ENCODE measurements at regions of chr3 and their contacts with region 1.

Region 1: GRCh38 chr3:4978204-4978965 is 852 bp upstream of the BHLHE40 start:
- DNase-seq: peak; percentile 95
- ATAC-seq: peak; percentile 59
- H3K4me3 Mint-ChIP-seq: peak overlapping the region; percentile 91
- H3K27ac Mint-ChIP-seq: peak overlapping the region; percentile 96
- H3K4me1 Mint-ChIP-seq: peaks cover 38% of the 10 kb centered on the region
- H3K27me3 Mint-ChIP-seq: no peaks in the 10 kb centered on the region

Region 2: DNA sequence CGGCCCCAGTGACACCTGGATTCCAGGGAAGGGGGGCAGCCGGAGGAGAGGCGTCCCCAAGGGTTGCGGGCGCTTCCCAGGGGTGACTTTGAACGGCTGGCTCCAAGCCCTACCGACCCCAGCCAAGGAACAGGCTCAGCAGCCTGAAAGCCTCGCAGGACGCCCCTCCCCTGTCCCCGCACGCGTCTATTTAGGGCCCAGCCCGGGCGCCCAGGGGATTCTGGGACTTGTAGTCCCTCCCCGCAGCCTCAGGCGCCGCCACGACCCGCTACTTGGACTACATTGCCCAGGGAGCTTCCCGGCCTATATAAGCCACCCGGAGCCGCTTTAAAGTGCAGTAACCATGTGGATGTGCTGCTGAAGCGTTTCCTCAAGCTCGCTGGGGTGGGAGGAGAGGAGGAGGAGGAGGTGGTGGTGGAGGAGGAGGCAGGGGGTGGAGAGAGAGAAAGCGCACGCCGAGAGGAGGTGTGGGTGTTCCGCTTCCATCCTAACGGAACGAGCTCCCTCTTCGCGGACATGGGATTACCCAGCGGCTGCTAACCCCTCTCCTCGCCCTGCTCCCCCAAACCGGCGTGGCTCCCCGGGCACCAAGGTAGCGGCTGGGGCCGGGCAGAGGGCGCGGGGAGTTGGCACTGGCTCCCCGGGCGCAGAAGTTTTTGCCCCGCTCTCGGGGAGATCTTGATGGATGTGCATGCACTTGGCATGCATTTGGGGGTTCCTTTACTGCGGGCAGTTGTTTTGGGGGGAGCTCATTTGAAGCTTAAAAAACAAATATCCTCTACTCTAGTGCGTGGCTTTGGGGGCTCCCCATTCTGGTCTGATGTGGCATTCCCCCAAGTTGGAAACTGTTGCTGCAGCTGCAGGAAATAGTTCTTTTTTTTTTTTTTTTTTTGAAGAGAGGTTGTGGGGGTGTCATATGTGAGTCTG is 485.1 kb before region 1 on chr3 and contains the start of gene ITPR1:
- CTCF ChIA-PET with region 1: no interaction called
- POLR2A ChIA-PET with region 1: interaction called, 18 read pairs
- DNase-seq: peak; percentile 99
- ATAC-seq: peak; percentile 91
- H3K4me3 Mint-ChIP-seq: peak within 1 kb of the TSS; percentile 94
- H3K27ac Mint-ChIP-seq: peak within 1 kb of the TSS; percentile 89
- H3K4me1 Mint-ChIP-seq: peaks cover 39% of the 10 kb centered on the region
- H3K27me3 Mint-ChIP-seq: peaks cover 20% of the 10 kb centered on the region
- total RNA-seq, gene ITPR1: 53.8 to 57.3 TPM

Region 3: GRCh38 chr3:4826237-4827100 is 151.9 kb before region 1 on chr3:
- CTCF ChIA-PET with region 1: interaction called, 272 read pairs
- POLR2A ChIA-PET with region 1: interaction called, 737 read pairs
- DNase-seq: no peak
- ATAC-seq: no peak
- H3K4me3 Mint-ChIP-seq: peak overlapping the region; percentile 78
- H3K27ac Mint-ChIP-seq: peak overlapping the region; percentile 86
- H3K4me1 Mint-ChIP-seq: peaks cover 94% of the 10 kb centered on the region
- H3K27me3 Mint-ChIP-seq: no peaks in the 10 kb centered on the region

Region 4: GRCh38 chr3:4866841-4867240 is 111.5 kb before region 1 on chr3:
- CTCF ChIA-PET with region 1: interaction called, 14 read pairs
- POLR2A ChIA-PET with region 1: interaction called, 12 read pairs
- DNase-seq: no peak
- ATAC-seq: no peak
- H3K4me3 Mint-ChIP-seq: peak overlapping the region; percentile 80
- H3K27ac Mint-ChIP-seq: peak overlapping the region; percentile 93
- H3K4me1 Mint-ChIP-seq: peaks cover 58% of the 10 kb centered on the region
- H3K27me3 Mint-ChIP-seq: no peaks in the 10 kb centered on the region

Region 5: DNA sequence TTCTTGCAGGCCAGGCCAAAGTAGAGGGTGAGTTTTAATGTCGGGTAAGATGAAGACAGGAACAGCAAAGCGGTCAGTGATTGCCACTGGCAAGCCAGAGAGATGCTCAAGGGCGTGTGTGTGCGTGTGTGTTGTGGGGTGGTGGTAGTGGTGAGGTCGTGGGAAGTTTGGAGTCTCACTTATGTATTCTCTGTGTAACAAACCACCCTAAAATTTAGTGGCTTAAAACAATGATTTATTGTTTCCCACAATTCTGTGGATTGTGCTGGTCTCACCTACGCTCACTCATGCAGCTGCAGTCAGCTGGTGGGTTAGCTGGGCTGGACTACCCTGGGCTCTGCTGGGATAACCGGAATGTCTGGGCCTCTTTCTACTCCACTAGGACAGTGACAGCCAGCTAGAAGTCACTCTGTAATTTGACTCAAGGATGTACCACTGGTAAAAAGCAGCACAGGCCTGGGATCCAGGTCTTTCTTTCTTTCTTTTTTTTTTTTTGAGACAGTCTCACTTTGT is 50.1 kb before region 1 on chr3:
- CTCF ChIA-PET with region 1: interaction called, 10 read pairs
- POLR2A ChIA-PET with region 1: interaction called, 6 read pairs
- DNase-seq: peak; percentile 47
- ATAC-seq: peak; percentile 60
- H3K4me3 Mint-ChIP-seq: no peak overlapping the region
- H3K27ac Mint-ChIP-seq: peak overlapping the region; percentile 76
- H3K4me1 Mint-ChIP-seq: peaks cover 33% of the 10 kb centered on the region
- H3K27me3 Mint-ChIP-seq: no peaks in the 10 kb centered on the region

Region 6: DNA sequence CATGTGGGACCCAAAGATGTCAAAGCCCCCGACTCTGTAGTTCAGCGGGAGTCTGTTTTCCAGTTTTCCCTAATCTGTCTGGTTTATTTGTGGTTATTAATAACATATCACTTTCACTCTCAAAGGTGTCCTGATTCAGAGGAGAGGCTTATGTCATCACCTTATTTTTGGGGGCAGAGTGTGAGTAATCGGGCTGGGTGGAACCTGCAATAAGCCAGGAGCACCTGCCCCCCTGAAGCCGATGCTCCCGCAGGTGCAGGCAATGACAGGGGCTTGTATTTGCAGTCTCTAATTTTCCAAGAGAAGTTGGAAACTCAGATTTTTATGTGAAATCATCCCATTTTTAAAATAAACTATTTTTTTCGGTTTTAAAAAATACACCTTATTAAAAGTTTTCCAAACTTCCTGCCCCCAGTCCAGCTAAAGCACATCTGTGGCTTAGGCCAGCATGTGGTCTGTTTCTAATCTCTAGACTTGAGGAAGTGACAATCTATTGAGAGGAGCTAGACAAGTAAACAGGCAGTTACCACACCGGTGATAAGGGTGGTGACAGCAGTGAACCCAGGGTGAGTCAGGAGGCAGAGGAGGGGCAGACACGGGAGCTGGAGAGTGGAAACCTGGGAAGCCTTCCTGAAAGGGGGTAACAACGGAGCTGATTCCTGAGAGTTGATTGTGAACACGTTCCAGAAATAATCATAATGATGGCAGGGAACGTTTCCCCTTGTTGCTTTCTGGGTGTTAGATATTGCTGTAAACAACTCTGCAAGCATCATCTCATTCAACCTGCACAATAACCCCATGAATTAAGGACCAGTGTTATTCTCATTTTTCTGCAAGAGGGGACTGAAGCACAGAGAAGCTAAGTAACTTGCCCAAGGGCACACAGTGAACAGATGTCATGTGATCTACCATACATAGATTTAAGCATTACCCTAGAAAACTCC is 38.1 kb after region 1 on chr3:
- CTCF ChIA-PET with region 1: interaction called, 123 read pairs
- POLR2A ChIA-PET with region 1: interaction called, 450 read pairs
- DNase-seq: peak; percentile 71
- ATAC-seq: peak; percentile 62
- H3K4me3 Mint-ChIP-seq: peak overlapping the region; percentile 35
- H3K27ac Mint-ChIP-seq: peak overlapping the region; percentile 86
- H3K4me1 Mint-ChIP-seq: peaks cover 96% of the 10 kb centered on the region
- H3K27me3 Mint-ChIP-seq: no peaks in the 10 kb centered on the region

Measured in activated CD8-positive, alpha-beta T cell treated with anti-CD3 and anti-CD28 coated beads, Interleukin-2, amount 10 ng/mL, durations not matched to agents 7 days and 5 days (primary cell).